ENCODE measurements at regions of chr9 and their contacts with region 1.

Region 1: DNA sequence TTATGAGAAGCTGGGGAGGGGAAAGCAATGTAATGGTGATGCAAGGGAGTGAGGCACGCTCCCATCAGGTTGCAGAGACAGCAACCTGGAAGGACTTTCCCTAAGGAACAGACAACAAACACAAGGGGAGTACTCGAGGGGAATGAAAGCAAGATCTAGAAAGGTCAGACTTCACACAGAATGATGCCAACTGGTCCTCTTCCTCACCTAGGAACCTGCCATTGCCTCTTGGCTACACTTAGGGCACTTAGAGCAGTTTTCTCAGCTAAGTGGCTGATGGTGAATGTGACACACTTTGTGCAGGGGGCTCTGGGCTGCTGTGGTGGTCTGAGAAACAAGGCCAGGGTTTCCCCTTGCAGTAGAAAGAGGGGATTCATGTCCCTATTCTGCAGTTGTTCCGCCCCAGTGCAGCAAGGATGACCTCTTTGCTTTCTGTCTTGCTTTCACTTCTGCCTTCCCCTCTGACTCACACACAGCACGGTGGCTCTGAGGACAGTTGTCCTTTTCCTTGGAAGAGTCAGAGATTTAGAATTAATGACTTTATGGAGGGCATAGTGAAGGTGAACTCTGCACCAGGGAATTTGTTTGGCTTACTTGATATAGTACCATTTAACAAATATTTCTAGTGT is 394.0 kb upstream of the KLF4 start:
- DNase-seq: peak; percentile 73 to 85 (median 80)
- H3K4me3 ChIP-seq: peak overlapping the region in 1 of 3 experiments; percentile 47
- H3K4me3 Mint-ChIP-seq: peak overlapping the region in 1 of 2 donors; percentile 76
- H3K27ac ChIP-seq: peak overlapping the region; percentile 43 to 76
- H3K27ac Mint-ChIP-seq: peak overlapping the region; percentile 83 to 95 (median 89)
- H3K4me1 ChIP-seq: peaks cover 25 to 45% of the 10 kb centered on the region in 2 donors
- H3K4me1 Mint-ChIP-seq: peaks cover 44% of the 10 kb centered on the region
- H3K27me3 ChIP-seq: no peaks in the 10 kb centered on the region
- H3K27me3 Mint-ChIP-seq: no peaks in the 10 kb centered on the region
- CTCF ChIP-seq: no peak

Region 2: DNA sequence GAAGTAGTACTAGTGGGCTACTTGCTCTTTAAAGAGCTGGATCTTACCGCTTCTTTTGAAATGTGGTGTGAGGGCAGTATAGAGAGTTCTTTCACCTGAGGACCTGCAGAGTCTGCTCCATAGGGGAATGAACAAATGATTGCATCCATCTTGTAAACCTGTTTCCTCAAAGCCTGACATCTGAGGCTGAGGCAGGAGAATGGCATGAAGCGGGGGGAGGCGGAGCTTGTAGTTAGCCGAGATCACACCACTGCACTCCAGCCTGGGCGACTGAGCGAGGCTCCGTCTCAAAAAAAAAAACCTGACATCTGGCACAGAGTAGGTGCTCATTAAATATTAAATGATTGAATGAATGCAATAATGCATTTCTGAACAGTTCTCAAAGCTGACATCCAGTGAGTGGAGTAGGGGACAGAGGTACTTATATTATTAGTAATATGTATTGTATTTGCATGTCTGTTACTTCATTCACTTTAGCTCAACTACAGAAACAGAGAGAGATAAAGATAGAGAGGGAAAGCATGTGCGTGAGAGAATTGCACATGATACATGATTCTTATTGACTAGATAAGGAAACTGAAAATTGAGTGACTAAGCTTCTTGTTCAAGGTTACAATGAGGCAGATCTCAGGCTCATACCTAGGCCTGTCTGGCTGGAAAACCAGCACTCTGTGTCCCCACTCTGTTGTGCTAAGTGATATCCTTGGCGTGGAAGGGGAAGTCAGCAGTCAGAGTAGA is 56.5 kb before region 1 on chr9:
- intact Hi-C with region 1: no loop called
- DNase-seq: no peak
- H3K4me3 ChIP-seq: no peak overlapping the region
- H3K4me3 Mint-ChIP-seq: peak overlapping the region in 1 of 2 donors; percentile 28
- H3K27ac ChIP-seq: no peak overlapping the region
- H3K27ac Mint-ChIP-seq: no peak overlapping the region
- H3K4me1 ChIP-seq: peaks cover 0 to 12% of the 10 kb centered on the region in 2 donors
- H3K4me1 Mint-ChIP-seq: peaks cover 20% of the 10 kb centered on the region
- H3K27me3 ChIP-seq: no peaks in the 10 kb centered on the region
- H3K27me3 Mint-ChIP-seq: peaks cover 0 to 2% (median 0%) of the 10 kb centered on the region in 3 donors
- CTCF ChIP-seq: no peak

Region 3: GRCh38 chr9:107976765-107977164 is 93.2 kb after region 1 on chr9:
- intact Hi-C with region 1: loop called (anchors 10 kb)
- DNase-seq: peak; percentile 78 to 83 (median 78)
- H3K4me3 ChIP-seq: no peak overlapping the region
- H3K4me3 Mint-ChIP-seq: peak overlapping the region in 1 of 2 donors; percentile 16
- H3K27ac ChIP-seq: peak overlapping the region; percentile 39 to 66
- H3K27ac Mint-ChIP-seq: peak overlapping the region; percentile 61 to 88 (median 83)
- H3K4me1 ChIP-seq: peaks cover 51 to 59% of the 10 kb centered on the region in 2 donors
- H3K4me1 Mint-ChIP-seq: peaks cover 32% of the 10 kb centered on the region
- H3K27me3 ChIP-seq: no peaks in the 10 kb centered on the region
- H3K27me3 Mint-ChIP-seq: no peaks in the 10 kb centered on the region
- CTCF ChIP-seq: no peak

Region 4: DNA sequence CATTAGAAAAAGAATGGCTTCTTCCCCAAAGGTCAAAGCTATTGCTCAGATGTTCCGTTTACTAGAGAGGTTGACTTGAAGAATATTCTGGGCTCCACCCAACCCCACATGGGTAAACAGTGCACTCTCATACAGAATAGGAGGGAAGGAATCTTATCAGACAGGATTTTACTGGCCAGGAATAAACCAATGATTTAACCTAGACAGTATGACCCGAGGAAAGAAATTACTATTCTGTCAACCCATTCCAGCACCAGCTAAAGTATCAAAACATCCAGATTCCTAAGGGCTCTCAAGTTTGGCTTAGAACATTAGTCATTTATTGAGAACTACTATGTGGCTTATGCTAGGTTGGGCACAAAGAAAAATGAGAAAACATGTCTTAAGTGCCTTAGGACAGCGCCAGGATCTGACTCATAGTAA is 99.6 kb after region 1 on chr9:
- intact Hi-C with region 1: loop called (anchors 10 kb)
- DNase-seq: peak; percentile 15 to 49 (median 39)
- H3K4me3 ChIP-seq: peak overlapping the region in 1 of 3 experiments; percentile 18
- H3K4me3 Mint-ChIP-seq: peak overlapping the region in 1 of 2 donors; percentile 28
- H3K27ac ChIP-seq: peak overlapping the region in 1 of 2 donors; percentile 84
- H3K27ac Mint-ChIP-seq: peak overlapping the region; percentile 81 to 96 (median 91)
- H3K4me1 ChIP-seq: peaks cover 64 to 73% of the 10 kb centered on the region in 2 donors
- H3K4me1 Mint-ChIP-seq: peaks cover 32% of the 10 kb centered on the region
- H3K27me3 ChIP-seq: no peaks in the 10 kb centered on the region
- H3K27me3 Mint-ChIP-seq: peaks cover 0 to 1% (median 0%) of the 10 kb centered on the region in 3 donors
- CTCF ChIP-seq: no peak

Measured in CD14-positive monocyte (primary cell).